ENCODE measurements at regions of chr17 and their contacts with region 1.

Region 1: DNA sequence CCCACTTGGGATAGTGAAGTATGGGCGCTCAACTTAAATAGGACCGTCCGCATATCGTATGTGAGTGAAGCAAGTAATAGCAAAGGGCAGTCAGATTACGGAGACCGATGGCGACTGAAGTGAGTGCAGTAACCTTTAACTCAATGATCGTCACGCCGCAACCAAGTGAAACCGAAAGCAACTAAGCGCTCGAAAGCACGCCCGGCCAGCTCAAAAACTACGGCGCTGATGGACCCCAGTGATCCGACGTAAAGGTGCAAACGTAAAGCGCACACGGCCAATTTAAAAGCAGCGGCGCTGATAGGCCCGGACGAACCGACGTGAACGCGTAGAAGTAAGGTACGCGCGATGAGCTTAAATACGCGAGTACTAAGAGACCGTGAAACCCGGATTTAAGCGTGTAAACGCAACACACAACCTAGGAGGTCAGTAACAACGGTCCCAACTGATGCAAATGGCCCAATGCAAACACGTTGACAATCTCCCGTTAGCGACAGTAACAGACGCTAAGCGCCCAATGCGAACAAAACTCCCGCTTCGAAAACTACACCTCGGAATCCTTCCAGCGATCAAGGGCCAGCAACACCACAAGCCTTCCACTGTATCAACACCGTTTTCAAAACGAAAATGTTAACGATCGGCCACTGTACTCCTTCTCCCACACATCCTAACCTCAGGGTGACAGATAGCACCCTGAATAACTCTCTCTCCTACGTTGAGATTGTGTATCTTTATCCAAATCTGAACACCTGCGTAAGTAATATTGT is 37.9 kb upstream of the ARL4D start:
- DNase-seq: peak; percentile 87
- H3K4me3 Mint-ChIP-seq: peak overlapping the region; percentile 86
- H3K27ac Mint-ChIP-seq: peak overlapping the region; percentile 100
- H3K4me1 Mint-ChIP-seq: peaks cover 16% of the 10 kb centered on the region
- H3K27me3 Mint-ChIP-seq: no peaks in the 10 kb centered on the region

Region 2: DNA sequence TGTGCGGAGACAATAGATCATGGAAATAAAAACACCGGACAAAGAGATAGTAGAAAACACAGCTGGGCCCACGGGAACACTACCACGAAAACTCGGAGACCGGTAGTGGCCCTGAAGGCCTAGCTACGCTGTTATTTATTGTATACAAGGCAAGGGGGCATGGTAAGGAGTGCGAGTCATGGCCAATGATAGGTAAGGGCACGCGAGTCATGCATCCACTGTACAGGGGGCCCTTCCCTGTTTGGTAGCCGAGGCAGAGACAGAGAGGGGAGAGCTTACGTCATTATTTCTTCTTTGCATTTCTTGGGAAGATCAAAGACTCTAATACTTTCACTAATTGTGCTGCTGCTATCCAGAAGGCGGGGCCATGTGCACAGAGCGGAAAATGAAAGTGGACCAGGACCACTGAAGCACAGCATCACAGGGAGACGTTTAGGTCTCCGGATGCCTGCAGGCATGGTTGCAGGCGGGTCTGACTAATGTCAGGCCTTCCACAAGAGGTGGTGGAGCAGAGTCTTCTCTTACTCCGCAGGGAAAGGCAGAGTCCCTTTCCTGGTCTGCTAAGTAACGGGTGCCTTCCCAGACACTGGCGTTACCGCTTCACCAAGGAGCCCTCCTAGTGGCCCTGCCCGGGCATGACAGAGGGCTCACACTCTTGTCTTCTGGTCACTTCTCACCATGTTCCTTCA is 36.6 kb before region 1 on chr17:
- CTCF ChIA-PET with region 1: no interaction called
- POLR2A ChIA-PET with region 1: no interaction called
- DNase-seq: no peak
- H3K4me3 Mint-ChIP-seq: no peak overlapping the region
- H3K27ac Mint-ChIP-seq: no peak overlapping the region
- H3K4me1 Mint-ChIP-seq: peaks cover 4% of the 10 kb centered on the region
- H3K27me3 Mint-ChIP-seq: peaks cover 26% of the 10 kb centered on the region

Region 3: GRCh38 chr17:43341715-43342588 is 19.0 kb before region 1 on chr17:
- CTCF ChIA-PET with region 1: interaction called, 16 read pairs
- POLR2A ChIA-PET with region 1: interaction called, 3 read pairs
- DNase-seq: no peak
- H3K4me3 Mint-ChIP-seq: no peak overlapping the region
- H3K27ac Mint-ChIP-seq: peak overlapping the region; percentile 5
- H3K4me1 Mint-ChIP-seq: peaks cover 10% of the 10 kb centered on the region
- H3K27me3 Mint-ChIP-seq: no peaks in the 10 kb centered on the region

Region 4: GRCh38 chr17:43381204-43381603 is 20.3 kb after region 1 on chr17:
- CTCF ChIA-PET with region 1: no interaction called
- POLR2A ChIA-PET with region 1: no interaction called
- DNase-seq: no peak
- H3K4me3 Mint-ChIP-seq: no peak overlapping the region
- H3K27ac Mint-ChIP-seq: no peak overlapping the region
- H3K4me1 Mint-ChIP-seq: peaks cover 4% of the 10 kb centered on the region
- H3K27me3 Mint-ChIP-seq: no peaks in the 10 kb centered on the region